Heart right ventricle (tissue), 16 donors: ENCODE measurements at regions of chr7 and their contacts with region 1.

Region 1: GRCh38 chr7:2354186-2354938 is at the start of gene EIF3B:
- DNase-seq: peak; percentile 88 to 93
- ATAC-seq: peak; percentile 93 to 97 (median 96)
- H3K4me3 ChIP-seq: peak within 1 kb of the TSS; percentile 88 to 100 (median 98)
- H3K27ac ChIP-seq: peak within 1 kb of the TSS; percentile 97 to 100 (median 99)
- H3K4me1 ChIP-seq: peaks cover 6 to 51% (median 45%) of the 10 kb centered on the region in 9 donors
- H3K27me3 ChIP-seq: no peaks in the 10 kb centered on the region
- CTCF ChIP-seq: no peak
- total RNA-seq, gene EIF3B: 64.0 to 102 (median 68.2) TPM

Region 2: GRCh38 chr7:1579481-1580421 is 774.6 kb before region 1 on chr7:
- intact Hi-C with region 1: loop called in 7 of 10 experiments (anchors 2 to 10 kb)
- DNase-seq: peak; percentile 61 to 81
- ATAC-seq: peak; percentile 90 to 96 (median 92)
- H3K4me3 ChIP-seq: no peak overlapping the region
- H3K27ac ChIP-seq: no peak overlapping the region
- H3K4me1 ChIP-seq: peaks cover 0 to 13% (median 4%) of the 10 kb centered on the region in 9 donors
- H3K27me3 ChIP-seq: no peaks in the 10 kb centered on the region
- CTCF ChIP-seq: peak; percentile 62 to 90 (median 84)

Region 3: GRCh38 chr7:2040893-2041270 is 313.5 kb before region 1 on chr7:
- intact Hi-C with region 1: no loop called
- DNase-seq: no peak
- ATAC-seq: no peak
- H3K4me3 ChIP-seq: no peak overlapping the region
- H3K27ac ChIP-seq: no peak overlapping the region
- H3K4me1 ChIP-seq: peaks cover 0 to 24% (median 17%) of the 10 kb centered on the region in 9 donors
- H3K27me3 ChIP-seq: no peaks in the 10 kb centered on the region
- CTCF ChIP-seq: no peak

Region 4: DNA sequence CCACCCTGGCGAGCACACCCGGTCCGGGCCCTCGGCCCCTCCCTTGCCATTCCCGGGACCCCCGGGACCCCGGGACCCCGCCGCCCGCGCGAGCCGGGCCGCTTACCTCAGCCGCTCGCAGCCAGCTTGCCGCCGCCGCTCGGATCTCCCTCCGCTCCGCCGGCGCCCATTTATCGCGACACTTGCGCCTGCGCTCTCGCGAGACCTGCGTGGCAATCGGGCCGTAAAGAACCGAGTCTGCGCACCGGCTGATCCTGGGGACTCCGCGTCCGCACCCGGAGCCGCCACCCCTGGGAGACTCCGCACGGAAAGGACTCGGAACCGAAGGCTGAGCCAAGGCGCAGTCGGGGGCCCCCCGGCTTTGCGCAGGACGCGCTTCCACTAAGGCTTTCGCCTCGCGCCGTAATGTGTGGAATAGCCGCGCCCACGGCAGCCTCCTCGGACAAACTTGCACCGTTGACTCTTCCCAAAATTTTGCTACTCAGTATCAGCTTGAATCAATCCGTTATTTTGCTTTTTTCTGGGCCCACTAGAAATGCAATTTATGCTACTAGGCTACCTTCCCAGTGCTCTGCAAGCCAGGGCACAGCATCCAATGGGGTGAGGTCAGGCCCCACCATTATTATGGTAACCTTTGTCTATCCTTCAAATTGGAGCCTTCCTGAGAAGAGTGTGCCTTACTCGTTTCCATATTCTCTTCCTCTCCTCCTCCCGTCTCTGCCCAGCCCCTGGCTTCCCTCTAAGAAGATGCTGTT is 121.4 kb before region 1 on chr7 and contains the start of gene MAD1L1:
- intact Hi-C with region 1: loop called in 1 of 10 experiments (anchors 5 kb)
- DNase-seq: peak; percentile 91 to 94
- ATAC-seq: peak; percentile 89 to 96 (median 94)
- H3K4me3 ChIP-seq: peak within 1 kb of the TSS; percentile 75 to 100 (median 93)
- H3K27ac ChIP-seq: peak within 1 kb of the TSS in 9 of 10 donors; percentile 30 to 88 (median 81)
- H3K4me1 ChIP-seq: peaks cover 8 to 43% (median 27%) of the 10 kb centered on the region in 9 donors
- H3K27me3 ChIP-seq: no peaks in the 10 kb centered on the region
- CTCF ChIP-seq: no peak
- total RNA-seq, gene MAD1L1: 13.8 to 22.4 (median 18.7) TPM

Region 5: GRCh38 chr7:2258661-2259365 is 95.5 kb before region 1 on chr7:
- intact Hi-C with region 1: loop called in 3 of 10 experiments (anchors 5 to 10 kb)
- DNase-seq: no peak
- ATAC-seq: no peak
- H3K4me3 ChIP-seq: no peak overlapping the region
- H3K27ac ChIP-seq: no peak overlapping the region
- H3K4me1 ChIP-seq: peaks cover 0 to 10% (median 0%) of the 10 kb centered on the region in 9 donors
- H3K27me3 ChIP-seq: no peaks in the 10 kb centered on the region
- CTCF ChIP-seq: no peak

Region 6: DNA sequence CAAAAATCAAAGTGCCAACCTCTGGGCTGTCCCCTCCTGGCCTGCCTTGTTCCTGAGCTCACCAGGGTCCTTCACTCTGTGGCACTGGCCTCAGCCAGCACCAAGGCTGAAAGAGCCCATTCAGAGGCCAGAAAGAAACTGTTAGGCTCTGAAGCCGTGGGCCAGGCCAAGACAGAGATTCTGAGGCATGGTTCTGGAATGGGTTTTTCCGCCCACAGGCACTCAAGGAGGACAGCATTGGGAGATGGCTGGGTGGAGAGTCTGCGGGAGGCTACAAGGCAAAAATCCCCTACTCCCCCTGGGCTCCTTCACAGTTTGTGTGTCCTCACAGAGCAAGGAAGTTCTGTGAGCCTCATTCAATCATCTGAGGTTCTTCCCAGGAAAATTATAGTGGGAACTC is 90.1 kb after region 1 on chr7:
- intact Hi-C with region 1: loop called in 1 of 10 experiments (anchors 10 kb)
- DNase-seq: peak in 1 of 2 donors; percentile 24
- ATAC-seq: peak in 7 of 8 donors; percentile 46 to 77 (median 50)
- H3K4me3 ChIP-seq: no peak overlapping the region
- H3K27ac ChIP-seq: peak overlapping the region in 6 of 10 donors; percentile 10 to 48 (median 29)
- H3K4me1 ChIP-seq: peaks cover 0 to 13% (median 0%) of the 10 kb centered on the region in 9 donors
- H3K27me3 ChIP-seq: no peaks in the 10 kb centered on the region
- CTCF ChIP-seq: no peak